HCT116 (cell line): ENCODE measurements at regions of chr15 and their contacts with region 1.

Region 1: DNA sequence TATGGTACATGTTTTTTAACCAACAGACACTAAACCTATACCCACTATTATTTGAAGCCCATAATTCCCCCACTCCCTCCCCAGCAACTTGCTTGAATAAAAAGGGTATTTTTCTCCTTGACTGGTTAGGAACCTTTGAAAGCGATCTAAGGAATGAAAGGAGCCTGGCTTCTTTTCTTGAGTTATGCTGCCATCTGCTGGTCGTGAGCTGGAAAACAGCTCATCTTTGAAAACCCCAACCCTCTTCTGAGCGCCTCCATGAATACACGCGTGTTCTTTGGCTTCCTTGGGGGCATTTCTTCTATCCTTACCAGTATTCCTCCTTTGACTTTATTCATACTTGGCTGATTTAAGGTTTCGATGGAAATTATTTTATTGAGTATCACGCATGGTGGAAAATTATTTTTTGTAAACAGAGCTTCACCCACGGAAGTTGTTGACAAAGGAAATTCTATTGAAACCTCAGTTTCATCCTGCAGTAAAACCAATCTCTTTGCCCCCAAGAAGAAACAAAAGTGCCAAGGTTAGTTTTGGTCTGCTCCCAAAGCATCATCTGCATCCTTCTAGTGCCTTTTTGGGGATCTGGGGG is 171.6 kb downstream of the SV2B start:
- DNase-seq: peak; percentile 60
- ATAC-seq: peak; percentile 85
- H3K4me3 ChIP-seq: no peak overlapping the region
- H3K27ac ChIP-seq: no peak overlapping the region
- H3K4me1 ChIP-seq: no peaks in the 10 kb centered on the region
- H3K27me3 ChIP-seq: no peaks in the 10 kb centered on the region; the same call in 1 of the 2 replicates
- CTCF ChIP-seq: peak; percentile 70 to 88 (median 81); a peak in 5 of 6 replicates
- POLR2A ChIP-seq: no peak
- RAD21 ChIP-seq: peak; percentile 90

Region 2: DNA sequence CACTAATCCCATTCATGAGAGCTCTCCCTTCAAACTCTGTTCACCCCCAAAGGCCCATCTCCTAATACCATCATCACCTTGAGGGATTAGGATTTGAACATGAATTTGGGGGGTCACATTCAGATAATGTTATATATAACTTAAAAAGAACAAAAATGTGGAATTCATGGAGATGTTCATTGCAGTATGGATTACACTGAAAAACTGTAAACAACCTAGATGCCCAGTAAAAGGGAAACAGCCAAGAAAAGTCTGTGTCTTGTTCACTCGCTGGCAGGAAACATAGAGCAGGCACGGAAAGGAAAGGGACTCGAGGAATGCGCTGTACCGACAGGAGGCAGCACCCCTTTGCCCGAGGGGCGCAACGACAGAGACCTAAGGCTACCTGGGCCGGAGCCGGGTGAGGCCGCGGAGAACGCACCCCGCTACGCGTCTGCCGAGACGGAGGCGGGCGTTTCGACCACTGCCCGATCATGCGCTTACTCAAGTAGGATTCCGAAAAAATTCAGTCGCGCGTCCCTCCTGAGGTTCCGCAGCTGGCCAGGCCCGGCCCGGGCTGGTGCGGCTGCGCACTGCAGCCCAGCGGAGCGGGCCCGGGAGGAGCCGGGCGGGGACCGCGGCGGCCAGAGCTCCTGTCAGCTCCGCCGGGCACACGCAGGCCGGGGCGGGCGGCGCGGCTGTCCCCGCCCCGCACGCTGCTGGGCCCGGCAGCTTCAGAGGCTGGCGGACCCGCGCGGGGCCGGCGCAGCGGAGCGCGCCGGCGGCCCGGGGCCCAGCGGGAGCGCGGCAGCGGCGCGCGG is 369.4 kb before region 1 on chr15:
- CTCF ChIA-PET with region 1: interaction called, 4 read pairs
- POLR2A ChIA-PET with region 1: no interaction called
- RAD21 ChIA-PET with region 1: no interaction called
- intact Hi-C with region 1: loop called (anchors 5 kb)
- DNase-seq: peak; percentile 49
- ATAC-seq: peak; percentile 88
- H3K4me3 ChIP-seq: peak overlapping the region; percentile 70 to 84
- H3K27ac ChIP-seq: peak overlapping the region; percentile 87
- H3K4me1 ChIP-seq: peaks cover 10 to 20% of the 10 kb centered on the region in 2 experiments; a peak in 3 of 4 replicates
- H3K27me3 ChIP-seq: no peaks in the 10 kb centered on the region
- CTCF ChIP-seq: peak; percentile 64 to 90 (median 74)
- POLR2A ChIP-seq: peak; percentile 86
- RAD21 ChIP-seq: peak; percentile 54

Region 3: DNA sequence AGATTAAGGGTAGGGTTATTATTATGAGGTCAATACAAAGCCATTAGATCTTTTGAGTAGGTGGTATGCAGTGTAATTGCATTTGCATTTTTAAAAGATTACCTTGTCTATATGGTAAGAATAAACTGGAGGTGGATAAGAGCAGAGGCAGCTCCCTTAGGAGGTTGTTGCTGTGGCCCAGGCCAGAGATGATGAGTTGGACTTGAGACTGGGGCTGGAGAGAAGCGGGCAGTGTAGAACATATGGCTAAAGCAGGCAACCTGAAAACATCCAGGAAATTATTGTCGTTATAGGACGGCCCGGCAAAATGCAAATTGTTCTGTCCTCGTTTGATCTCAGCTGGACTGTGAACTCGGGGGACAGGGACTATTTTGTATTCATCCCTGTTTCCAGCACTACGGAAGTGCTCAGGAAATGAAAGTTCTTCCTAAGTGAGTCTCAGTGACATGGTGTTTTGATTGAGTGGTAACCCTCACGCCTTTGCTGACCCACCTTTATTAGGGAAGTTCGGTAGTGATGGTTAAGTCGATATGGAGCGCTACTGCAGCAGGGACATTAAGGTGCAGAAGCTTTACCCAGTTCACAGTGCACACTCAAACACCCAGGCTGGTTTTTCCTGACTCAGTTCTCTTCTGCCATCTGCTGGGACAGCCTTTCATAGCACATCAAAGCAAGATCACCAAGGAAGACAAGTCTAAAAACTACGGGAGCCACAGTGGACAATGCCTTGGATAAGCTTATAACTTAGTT is 222.1 kb before region 1 on chr15:
- CTCF ChIA-PET with region 1: interaction called, 82 read pairs
- POLR2A ChIA-PET with region 1: no interaction called
- RAD21 ChIA-PET with region 1: interaction called in 1 of 2 experiments, 3 read pairs
- intact Hi-C with region 1: no loop called
- DNase-seq: peak; percentile 73
- ATAC-seq: peak; percentile 94
- H3K4me3 ChIP-seq: no peak overlapping the region
- H3K27ac ChIP-seq: no peak overlapping the region
- H3K4me1 ChIP-seq: peaks cover 0 to 6% of the 10 kb centered on the region in 2 experiments; a peak in 1 of 4 replicates
- H3K27me3 ChIP-seq: peaks cover 32% of the 10 kb centered on the region
- CTCF ChIP-seq: peak; percentile 68 to 74 (median 73); a peak in 5 of 6 replicates
- POLR2A ChIP-seq: no peak
- RAD21 ChIP-seq: peak; percentile 87

Region 4: GRCh38 chr15:91055548-91056331 is 215.9 kb before region 1 on chr15:
- CTCF ChIA-PET with region 1: interaction called, 82 read pairs
- POLR2A ChIA-PET with region 1: interaction called, 3 read pairs
- RAD21 ChIA-PET with region 1: interaction called, 10 to 13 read pairs
- intact Hi-C with region 1: loop called (anchors 1 kb)
- DNase-seq: peak; percentile 75
- ATAC-seq: peak; percentile 98
- H3K4me3 ChIP-seq: 0 out of 4 replicates have a peak overlapping the region, but pooled peaks of 1 of the 2 experiments have one; percentile 18
- H3K27ac ChIP-seq: no peak overlapping the region
- H3K4me1 ChIP-seq: peaks cover 0 to 6% of the 10 kb centered on the region in 2 experiments; a peak in 1 of 4 replicates
- H3K27me3 ChIP-seq: peaks cover 67% of the 10 kb centered on the region
- CTCF ChIP-seq: peak; percentile 83 to 89 (median 88)
- POLR2A ChIP-seq: no peak
- RAD21 ChIP-seq: peak; percentile 94

Region 5: GRCh38 chr15:91246998-91247397 is 24.7 kb before region 1 on chr15:
- CTCF ChIA-PET with region 1: interaction called, 10 read pairs
- POLR2A ChIA-PET with region 1: no interaction called
- RAD21 ChIA-PET with region 1: no interaction called
- intact Hi-C with region 1: no loop called
- DNase-seq: no peak
- ATAC-seq: no peak
- H3K4me3 ChIP-seq: no peak overlapping the region
- H3K27ac ChIP-seq: no peak overlapping the region
- H3K4me1 ChIP-seq: no peaks in the 10 kb centered on the region
- H3K27me3 ChIP-seq: peaks cover 49% of the 10 kb centered on the region
- CTCF ChIP-seq: no peak
- POLR2A ChIP-seq: no peak
- RAD21 ChIP-seq: no peak

Region 6: GRCh38 chr15:91258425-91258779 is 13.3 kb before region 1 on chr15:
- CTCF ChIA-PET with region 1: interaction called, 11 read pairs
- POLR2A ChIA-PET with region 1: no interaction called
- RAD21 ChIA-PET with region 1: interaction called in 1 of 2 experiments, 3 read pairs
- intact Hi-C with region 1: no loop called
- DNase-seq: no peak
- ATAC-seq: peak; percentile 77
- H3K4me3 ChIP-seq: no peak overlapping the region
- H3K27ac ChIP-seq: no peak overlapping the region
- H3K4me1 ChIP-seq: 0 out of 4 replicates have a peak, but pooled peaks cover 0 to 4% of the 10 kb centered on the region in 2 experiments
- H3K27me3 ChIP-seq: peaks cover 5% of the 10 kb centered on the region; the same call in 1 of the 2 replicates
- CTCF ChIP-seq: peak in 2 of 3 experiments; percentile 19; a peak in 1 of 6 replicates
- POLR2A ChIP-seq: no peak
- RAD21 ChIP-seq: no peak

Region 7: DNA sequence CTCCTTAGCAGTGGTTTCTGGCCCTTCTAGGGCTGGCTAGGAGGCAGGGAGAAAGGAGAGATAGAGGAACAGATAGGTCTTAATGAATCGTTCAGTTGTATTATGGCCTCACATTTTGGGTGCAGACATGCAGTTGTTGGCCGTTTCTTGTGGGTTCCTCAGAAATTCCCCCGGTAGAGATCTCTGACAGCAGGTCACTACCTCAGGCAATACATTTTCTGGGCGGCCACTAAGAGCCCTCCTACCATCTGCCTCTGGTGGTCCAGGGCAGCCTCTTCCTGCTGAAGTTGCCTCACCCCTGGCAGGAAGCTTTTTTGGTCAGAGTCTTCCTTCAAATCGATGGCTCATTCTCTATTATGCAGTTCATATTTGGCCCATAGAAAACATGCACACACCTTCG is 94.5 kb after region 1 on chr15:
- CTCF ChIA-PET with region 1: no interaction called
- POLR2A ChIA-PET with region 1: no interaction called
- RAD21 ChIA-PET with region 1: no interaction called
- intact Hi-C with region 1: no loop called
- DNase-seq: no peak
- ATAC-seq: no peak
- H3K4me3 ChIP-seq: no peak overlapping the region
- H3K27ac ChIP-seq: no peak overlapping the region
- H3K4me1 ChIP-seq: no peaks in the 10 kb centered on the region
- H3K27me3 ChIP-seq: peaks cover 3% of the 10 kb centered on the region
- CTCF ChIP-seq: no peak
- POLR2A ChIP-seq: no peak
- RAD21 ChIP-seq: no peak